IMR-90 (cell line): ENCODE measurements at regions of chr2 and their contacts with region 1.

Region 1: GRCh38 chr2:42944779-42945415 is 152.5 kb upstream of the HAAO start:
- DNase-seq: peak; percentile 57
- ATAC-seq: peak; percentile 46; the same call in 1 of the 2 replicates
- H3K4me3 ChIP-seq: no peak overlapping the region
- H3K27ac ChIP-seq: no peak overlapping the region
- H3K4me1 ChIP-seq: no peaks in the 10 kb centered on the region; the same call in 1 of the 2 replicates
- H3K27me3 ChIP-seq: no peaks in the 10 kb centered on the region
- CTCF ChIP-seq: no peak
- POLR2A ChIP-seq: no peak
- RAD21 ChIP-seq: no peak

Region 2: DNA sequence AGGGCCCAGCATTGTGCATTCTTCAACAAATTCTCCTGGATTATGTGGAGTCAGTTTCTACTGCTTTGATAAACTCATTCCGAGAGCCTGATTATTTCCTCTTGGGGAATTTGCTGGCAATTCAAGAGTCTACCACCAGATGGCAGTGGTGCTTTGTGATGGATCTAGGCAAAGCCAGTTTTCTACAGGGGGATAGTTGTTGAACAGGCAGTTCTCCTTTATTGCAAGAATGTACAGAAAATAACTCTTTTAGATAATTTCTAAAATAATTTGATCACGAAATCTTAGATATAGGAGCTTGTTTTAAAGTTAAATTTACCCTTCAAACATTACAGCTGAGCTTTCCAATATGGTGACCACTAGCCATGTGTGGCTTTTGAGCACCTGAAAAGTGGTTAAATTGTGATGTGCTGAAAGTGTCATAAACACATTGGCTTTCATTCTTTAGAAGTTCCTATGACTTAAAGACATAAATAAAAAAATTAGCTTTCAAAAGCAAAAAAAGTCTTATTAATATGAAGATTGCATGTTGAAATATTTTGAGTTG is 85.8 kb before region 1 on chr2:
- CTCF ChIA-PET with region 1: no interaction called
- POLR2A ChIA-PET with region 1: no interaction called
- dilution Hi-C with region 1: no loop called
- in situ Hi-C with region 1: no loop called
- intact Hi-C with region 1: loop called (anchors 1 kb)
- DNase-seq: peak; percentile 81
- ATAC-seq: peak; percentile 81
- H3K4me3 ChIP-seq: no peak overlapping the region
- H3K27ac ChIP-seq: no peak overlapping the region
- H3K4me1 ChIP-seq: peaks cover 5% of the 10 kb centered on the region
- H3K27me3 ChIP-seq: no peaks in the 10 kb centered on the region
- CTCF ChIP-seq: peak; percentile 93
- POLR2A ChIP-seq: no peak
- RAD21 ChIP-seq: peak; percentile 95

Region 3: GRCh38 chr2:42964439-42965083 is 19.7 kb after region 1 on chr2:
- CTCF ChIA-PET with region 1: no interaction called
- POLR2A ChIA-PET with region 1: no interaction called
- dilution Hi-C with region 1: no loop called
- in situ Hi-C with region 1: no loop called
- intact Hi-C with region 1: no loop called
- DNase-seq: peak; percentile 98
- ATAC-seq: peak; percentile 83
- H3K4me3 ChIP-seq: no peak overlapping the region
- H3K27ac ChIP-seq: peak overlapping the region; percentile 69
- H3K4me1 ChIP-seq: peaks cover 44% of the 10 kb centered on the region
- H3K27me3 ChIP-seq: no peaks in the 10 kb centered on the region
- CTCF ChIP-seq: no peak
- POLR2A ChIP-seq: no peak
- RAD21 ChIP-seq: no peak

Region 4: DNA sequence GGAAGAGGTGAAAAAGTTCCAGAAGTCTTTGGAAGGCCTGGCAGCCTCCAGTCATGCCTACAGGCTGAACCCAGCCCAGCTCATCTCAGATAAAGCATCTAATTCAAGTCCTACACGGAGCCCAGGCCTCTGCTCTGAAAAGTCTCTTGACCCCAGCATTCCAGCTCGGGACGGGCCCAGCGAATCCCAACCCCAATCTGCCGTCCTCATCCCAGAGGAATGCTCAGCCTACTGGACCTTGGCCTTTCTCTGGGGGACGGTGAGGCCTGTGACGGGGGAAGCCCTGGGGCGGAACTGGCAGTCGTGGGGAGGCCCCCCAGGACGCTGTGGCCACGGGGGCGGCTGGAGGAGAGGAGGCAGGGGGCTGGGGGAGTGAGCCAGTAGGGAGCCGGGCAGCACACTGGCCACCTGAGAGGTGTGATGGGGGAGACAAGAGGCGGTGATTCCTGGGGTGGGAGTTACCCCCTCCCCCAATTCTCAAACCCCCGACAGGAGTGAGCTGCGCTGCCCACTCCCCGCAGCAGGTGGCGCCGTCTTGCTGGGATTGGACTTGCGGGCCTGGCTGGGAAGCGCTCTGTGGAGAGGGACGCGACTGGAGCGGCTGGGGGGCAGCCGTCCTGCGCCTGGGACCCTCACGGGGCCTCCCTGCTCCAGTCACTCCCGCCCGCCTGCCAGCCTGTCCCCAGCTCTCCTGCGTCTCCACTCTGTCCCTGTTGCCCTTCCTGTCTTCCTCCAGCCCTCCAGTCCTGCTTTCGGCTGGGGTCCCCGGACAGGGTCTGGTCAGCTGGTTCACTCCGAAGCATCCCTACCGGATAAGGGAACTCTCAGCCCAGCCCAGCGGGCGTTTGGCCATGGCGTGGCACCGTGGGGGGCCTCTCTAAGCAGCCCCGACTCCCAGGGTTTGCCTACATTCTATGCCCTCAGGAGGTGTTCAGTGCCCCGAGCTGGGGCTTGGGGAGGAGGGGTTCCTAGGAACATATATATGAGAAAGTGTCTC is 30.1 kb after region 1 on chr2:
- CTCF ChIA-PET with region 1: interaction called, 3 read pairs
- POLR2A ChIA-PET with region 1: no interaction called
- dilution Hi-C with region 1: no loop called
- in situ Hi-C with region 1: no loop called
- intact Hi-C with region 1: loop called (anchors 2 kb)
- DNase-seq: peak; percentile 63
- ATAC-seq: peak; percentile 91
- H3K4me3 ChIP-seq: peak overlapping the region; percentile 15; the same call in 1 of the 2 replicates
- H3K27ac ChIP-seq: peak overlapping the region; percentile 79
- H3K4me1 ChIP-seq: peaks cover 20% of the 10 kb centered on the region
- H3K27me3 ChIP-seq: no peaks in the 10 kb centered on the region
- CTCF ChIP-seq: peak; percentile 88
- POLR2A ChIP-seq: peak; percentile 54; the same call in 1 of the 2 replicates
- RAD21 ChIP-seq: peak; percentile 97

Region 5: GRCh38 chr2:43484323-43484930 is 539.5 kb after region 1 on chr2:
- CTCF ChIA-PET with region 1: interaction called, 10 read pairs
- POLR2A ChIA-PET with region 1: no interaction called
- dilution Hi-C with region 1: no loop called
- in situ Hi-C with region 1: loop called (anchors 5 kb)
- intact Hi-C with region 1: loop called (anchors 1 kb)
- DNase-seq: peak; percentile 85
- ATAC-seq: peak; percentile 73
- H3K4me3 ChIP-seq: no peak overlapping the region
- H3K27ac ChIP-seq: no peak overlapping the region
- H3K4me1 ChIP-seq: no peaks in the 10 kb centered on the region
- H3K27me3 ChIP-seq: no peaks in the 10 kb centered on the region
- CTCF ChIP-seq: peak; percentile 65
- POLR2A ChIP-seq: no peak
- RAD21 ChIP-seq: peak; percentile 82

Region 6: DNA sequence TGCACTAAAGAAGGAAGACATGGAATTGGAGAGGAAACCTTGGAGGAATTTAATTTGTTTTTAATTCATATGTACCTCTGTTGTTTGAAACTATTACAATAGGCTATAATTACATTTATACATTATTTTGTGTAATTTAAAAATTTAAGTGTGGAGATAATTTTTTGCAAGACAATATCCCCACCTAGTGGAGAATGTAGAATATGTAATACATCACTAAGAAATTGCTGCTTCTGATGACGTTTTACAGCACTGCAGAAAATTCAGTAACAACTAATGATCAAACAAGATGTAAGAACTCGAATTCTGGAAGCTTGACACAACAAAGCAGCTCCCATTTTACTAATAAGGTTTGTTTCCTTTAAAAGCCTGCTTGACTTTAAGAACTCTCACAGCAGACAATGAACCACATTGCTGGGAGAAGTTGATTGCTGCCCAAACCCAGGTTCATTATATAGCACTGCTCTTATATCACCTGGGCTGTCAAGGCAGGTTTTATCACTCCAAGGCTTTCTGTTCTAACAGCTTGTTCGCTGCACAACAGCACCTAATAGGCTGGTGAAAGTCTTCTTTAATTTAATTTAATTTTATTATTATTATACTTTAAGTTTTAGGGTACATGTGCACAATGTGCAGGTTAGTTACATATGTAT is 597.5 kb after region 1 on chr2:
- CTCF ChIA-PET with region 1: no interaction called
- POLR2A ChIA-PET with region 1: no interaction called
- dilution Hi-C with region 1: no loop called
- in situ Hi-C with region 1: no loop called
- intact Hi-C with region 1: loop called (anchors 1 kb)
- DNase-seq: peak; percentile 68
- ATAC-seq: peak; percentile 77
- H3K4me3 ChIP-seq: no peak overlapping the region
- H3K27ac ChIP-seq: no peak overlapping the region
- H3K4me1 ChIP-seq: peaks cover 7% of the 10 kb centered on the region
- H3K27me3 ChIP-seq: no peaks in the 10 kb centered on the region
- CTCF ChIP-seq: peak; percentile 58
- POLR2A ChIP-seq: no peak
- RAD21 ChIP-seq: peak; percentile 72

Region 7: GRCh38 chr2:43576981-43577892 is 632.3 kb after region 1 on chr2:
- CTCF ChIA-PET with region 1: no interaction called
- POLR2A ChIA-PET with region 1: no interaction called
- dilution Hi-C with region 1: no loop called
- in situ Hi-C with region 1: no loop called
- intact Hi-C with region 1: loop called (anchors 1 kb)
- DNase-seq: peak; percentile 84
- ATAC-seq: peak; percentile 77
- H3K4me3 ChIP-seq: no peak overlapping the region
- H3K27ac ChIP-seq: no peak overlapping the region
- H3K4me1 ChIP-seq: peaks cover 2% of the 10 kb centered on the region; the same call in 1 of the 2 replicates
- H3K27me3 ChIP-seq: no peaks in the 10 kb centered on the region
- CTCF ChIP-seq: peak; percentile 82
- POLR2A ChIP-seq: no peak
- RAD21 ChIP-seq: peak; percentile 26; the same call in 1 of the 2 replicates

Region 8: DNA sequence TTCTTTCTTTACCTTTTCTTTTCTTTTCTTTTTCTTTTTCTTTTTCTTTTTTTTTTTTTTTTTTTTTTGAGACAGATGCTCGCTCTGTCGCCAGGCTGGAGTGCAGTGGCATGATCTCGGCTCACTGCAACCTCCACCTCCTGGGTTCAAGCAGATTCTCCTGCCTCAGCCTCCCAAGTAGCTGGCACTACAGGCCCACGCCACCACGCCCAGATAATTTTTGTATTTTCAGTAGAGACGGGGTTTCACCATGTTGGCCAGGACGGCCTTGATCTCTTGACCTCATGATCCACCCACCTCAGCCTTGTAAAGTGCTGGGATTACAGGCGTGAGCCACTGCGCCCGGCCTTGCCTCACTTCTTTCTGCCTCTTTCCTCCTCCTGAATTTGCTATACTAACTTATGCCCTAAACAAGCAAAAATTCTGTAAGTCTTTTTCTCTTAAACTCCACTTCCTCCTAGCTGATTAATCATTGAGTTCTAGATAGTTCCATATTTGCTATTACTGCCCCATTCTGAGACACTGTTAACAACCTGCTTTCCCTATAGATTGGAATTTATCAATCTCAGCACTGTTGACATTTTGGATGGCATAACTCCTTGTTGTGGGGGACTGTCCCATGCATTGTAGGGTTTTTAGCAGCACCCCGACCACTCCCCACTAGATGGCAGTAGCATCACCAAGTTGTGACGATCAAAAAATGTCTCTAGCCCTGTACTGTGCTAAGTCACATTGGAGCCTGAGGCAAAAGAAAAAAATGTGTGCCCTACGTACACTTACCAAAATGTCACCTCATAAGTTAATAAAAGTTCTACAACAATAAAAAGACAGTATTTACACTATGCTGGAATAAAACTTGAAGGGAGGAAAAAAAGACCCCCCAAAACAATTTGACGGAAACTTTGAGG is 667.3 kb after region 1 on chr2:
- CTCF ChIA-PET with region 1: no interaction called
- POLR2A ChIA-PET with region 1: no interaction called
- dilution Hi-C with region 1: no loop called
- in situ Hi-C with region 1: no loop called
- intact Hi-C with region 1: loop called (anchors 2 kb)
- DNase-seq: peak; percentile 76
- ATAC-seq: peak; percentile 96
- H3K4me3 ChIP-seq: no peak overlapping the region
- H3K27ac ChIP-seq: no peak overlapping the region
- H3K4me1 ChIP-seq: peaks cover 2% of the 10 kb centered on the region; the same call in 1 of the 2 replicates
- H3K27me3 ChIP-seq: peaks cover 3% of the 10 kb centered on the region; the same call in 1 of the 2 replicates
- CTCF ChIP-seq: peak; percentile 84
- POLR2A ChIP-seq: no peak
- RAD21 ChIP-seq: peak; percentile 78